Heart left ventricle (tissue), 16 donors: ENCODE measurements at regions of chr3 and their contacts with region 1.

Region 1: DNA sequence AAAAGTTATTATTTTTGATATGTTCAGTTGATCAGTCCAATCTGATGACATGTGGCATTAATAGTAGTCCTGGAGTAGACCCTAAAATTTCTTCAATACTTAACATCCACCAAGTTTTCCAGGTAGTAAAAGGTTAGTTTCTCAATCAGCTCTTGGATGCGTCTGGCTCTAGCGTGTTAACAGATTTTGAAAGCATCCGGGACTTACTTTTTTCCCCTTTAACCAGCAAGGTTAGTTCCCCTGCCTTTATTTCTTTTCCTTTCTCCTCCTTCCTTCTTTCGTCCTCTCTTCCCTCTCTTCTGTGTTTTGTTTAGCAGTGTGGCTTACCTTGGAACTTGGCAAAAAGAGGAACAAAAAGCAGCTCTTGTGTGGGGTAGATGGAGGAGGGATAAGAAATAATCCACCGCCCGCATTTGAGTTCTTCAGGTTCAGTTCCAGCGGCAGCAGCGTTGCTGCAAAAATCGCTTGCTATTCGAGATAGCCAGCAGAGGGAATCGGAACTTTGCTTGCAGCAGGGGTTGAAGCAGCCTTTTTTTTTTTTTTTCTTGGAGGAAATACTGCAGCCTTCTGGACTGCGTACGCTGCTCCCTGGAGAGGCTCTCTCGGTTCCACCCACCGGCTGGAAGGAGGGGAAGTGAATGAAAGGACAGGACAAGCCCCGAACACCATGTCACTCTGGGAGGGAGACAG is at the start of gene RBMS3:
- DNase-seq: peak; percentile 90 to 93 (median 92)
- ATAC-seq: peak; percentile 91 to 95 (median 94)
- H3K4me3 ChIP-seq: peak within 1 kb of the TSS; percentile 43 to 84 (median 66)
- H3K27ac ChIP-seq: peak within 1 kb of the TSS; percentile 83 to 96 (median 91)
- H3K4me1 ChIP-seq: peaks cover 0 to 29% (median 13%) of the 10 kb centered on the region in 12 donors
- H3K27me3 ChIP-seq: no peaks in the 10 kb centered on the region
- CTCF ChIP-seq: peak; percentile 22 to 80 (median 54)
- POLR2A ChIP-seq: peak in 1 of 2 donors; percentile 58
- total RNA-seq, gene RBMS3: 19.0 to 35.6 (median 27.3) TPM

Region 2: DNA sequence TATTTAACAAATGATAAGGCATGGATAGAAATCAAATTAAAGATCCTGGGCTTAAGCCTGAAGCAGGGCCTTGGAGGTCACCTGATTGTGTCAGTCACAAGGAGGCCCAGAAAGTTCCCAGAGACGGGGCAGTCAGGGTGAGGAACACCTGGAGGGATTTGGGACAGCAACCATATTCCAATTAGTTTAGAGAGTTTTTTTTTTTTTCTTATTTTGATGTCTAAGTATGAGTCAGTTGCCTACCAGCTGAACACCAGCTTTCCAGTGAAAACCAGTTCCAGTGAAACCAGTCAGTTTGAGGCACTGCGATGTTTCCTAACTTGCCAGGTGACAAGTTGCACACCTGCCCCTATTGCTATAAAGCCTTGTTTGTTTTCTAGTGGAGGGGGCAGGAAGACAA is 581.3 kb before region 1 on chr3:
- intact Hi-C with region 1: no loop called
- DNase-seq: no peak
- ATAC-seq: no peak
- H3K4me3 ChIP-seq: no peak overlapping the region
- H3K27ac ChIP-seq: no peak overlapping the region
- H3K4me1 ChIP-seq: peaks cover 0 to 4% (median 0%) of the 10 kb centered on the region in 12 donors
- H3K27me3 ChIP-seq: no peaks in the 10 kb centered on the region
- CTCF ChIP-seq: no peak
- POLR2A ChIP-seq: no peak

Region 3: GRCh38 chr3:29164825-29165224 is 115.7 kb before region 1 on chr3:
- intact Hi-C with region 1: loop called in 2 of 10 experiments (anchors 5 to 10 kb)
- DNase-seq: no peak
- ATAC-seq: no peak
- H3K4me3 ChIP-seq: no peak overlapping the region
- H3K27ac ChIP-seq: no peak overlapping the region
- H3K4me1 ChIP-seq: peaks cover 0 to 14% (median 0%) of the 10 kb centered on the region in 12 donors
- H3K27me3 ChIP-seq: no peaks in the 10 kb centered on the region
- CTCF ChIP-seq: no peak
- POLR2A ChIP-seq: no peak

Region 4: GRCh38 chr3:29245441-29245840 is 35.1 kb before region 1 on chr3:
- intact Hi-C with region 1: no loop called
- DNase-seq: no peak
- ATAC-seq: no peak
- H3K4me3 ChIP-seq: no peak overlapping the region
- H3K27ac ChIP-seq: no peak overlapping the region
- H3K4me1 ChIP-seq: peaks cover 0 to 4% (median 0%) of the 10 kb centered on the region in 12 donors
- H3K27me3 ChIP-seq: no peaks in the 10 kb centered on the region
- CTCF ChIP-seq: no peak
- POLR2A ChIP-seq: no peak

Region 5: DNA sequence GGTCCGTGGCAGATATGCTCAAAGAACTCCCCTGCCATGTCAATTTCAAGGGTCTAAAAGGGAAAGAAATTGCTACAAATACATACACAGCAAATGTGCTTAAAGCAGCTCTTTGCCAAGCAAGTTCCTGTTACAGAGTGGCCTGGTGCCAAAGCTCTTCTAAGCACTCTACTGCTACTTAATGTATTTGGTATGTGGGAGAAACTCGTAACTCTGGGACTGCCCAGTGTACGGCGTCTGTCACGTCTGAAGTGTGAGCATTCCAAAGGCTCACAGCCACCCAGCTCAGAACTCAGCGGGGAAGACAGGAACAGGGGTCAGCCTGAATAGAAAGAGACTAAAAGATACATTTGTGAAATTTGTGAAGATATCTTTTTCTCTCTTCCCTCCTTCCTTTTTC is 54.9 kb after region 1 on chr3:
- intact Hi-C with region 1: loop called in 9 of 10 experiments (anchors 5 to 10 kb)
- DNase-seq: peak; percentile 65 to 89 (median 86)
- ATAC-seq: peak; percentile 95 to 98 (median 96)
- H3K4me3 ChIP-seq: peak overlapping the region in 10 of 12 donors; percentile 6 to 48 (median 35)
- H3K27ac ChIP-seq: peak overlapping the region; percentile 29 to 91 (median 76)
- H3K4me1 ChIP-seq: peaks cover 14 to 96% (median 52%) of the 10 kb centered on the region in 12 donors
- H3K27me3 ChIP-seq: no peaks in the 10 kb centered on the region
- CTCF ChIP-seq: no peak
- POLR2A ChIP-seq: no peak

Region 6: DNA sequence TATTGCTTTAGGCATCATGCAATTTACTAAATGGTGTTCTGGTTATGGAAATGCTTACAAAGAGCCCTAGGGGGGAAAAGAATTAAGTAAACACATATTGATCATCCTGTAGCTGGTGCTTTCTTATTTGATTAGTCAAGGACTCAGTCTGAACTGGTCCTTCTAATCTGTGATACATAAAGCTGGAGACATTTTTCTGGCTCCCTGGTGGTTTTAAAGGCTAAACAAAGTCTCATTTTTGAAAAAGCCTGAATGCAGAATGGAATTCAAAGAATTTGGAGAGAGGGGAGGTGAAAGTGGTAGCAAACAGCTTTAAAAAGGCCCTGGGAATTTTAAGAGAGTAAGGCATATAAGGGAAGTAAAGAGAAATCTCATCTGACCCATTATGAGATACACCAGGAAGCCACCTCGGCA is 150.0 kb after region 1 on chr3:
- intact Hi-C with region 1: loop called in 4 of 10 experiments (anchors 5 to 10 kb)
- DNase-seq: no peak
- ATAC-seq: no peak
- H3K4me3 ChIP-seq: no peak overlapping the region
- H3K27ac ChIP-seq: peak overlapping the region in 3 of 12 donors; percentile 2 to 21 (median 15)
- H3K4me1 ChIP-seq: peaks cover 0 to 69% (median 32%) of the 10 kb centered on the region in 12 donors
- H3K27me3 ChIP-seq: no peaks in the 10 kb centered on the region
- CTCF ChIP-seq: no peak
- POLR2A ChIP-seq: no peak

Region 7: DNA sequence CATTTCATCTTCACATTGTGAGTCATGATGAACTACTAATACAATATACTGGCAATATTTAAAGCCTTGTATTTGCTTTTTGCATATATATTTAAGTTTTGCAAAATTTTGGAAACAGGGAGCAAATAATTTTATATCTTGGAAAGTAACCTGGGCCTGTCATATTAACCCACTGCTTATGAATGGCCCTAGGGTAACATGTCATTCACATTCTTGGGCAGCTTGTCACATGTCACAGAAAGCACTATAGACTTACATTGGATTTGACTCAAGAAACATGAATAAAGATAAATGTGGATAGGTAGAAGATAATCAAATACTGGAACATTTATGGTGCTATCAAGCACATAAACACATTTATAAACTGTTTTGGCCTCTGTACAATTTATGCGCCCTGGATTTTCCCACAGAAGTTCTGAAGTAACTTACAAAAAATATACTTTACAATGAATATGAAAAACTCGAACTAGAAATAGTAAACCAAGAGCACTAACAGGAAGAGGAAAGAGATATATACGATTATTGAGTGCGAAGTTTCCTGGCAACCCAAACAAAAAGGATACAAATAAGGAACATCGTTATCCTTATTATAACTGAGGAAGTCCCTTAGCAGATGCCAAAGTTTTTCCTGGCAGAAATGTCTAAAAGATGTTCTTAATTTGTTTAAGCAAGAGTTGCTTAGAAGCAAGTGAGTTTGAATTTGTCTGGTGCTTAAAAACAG is 257.5 kb after region 1 on chr3:
- intact Hi-C with region 1: loop called in 2 of 10 experiments (anchors 5 kb)
- DNase-seq: no peak
- ATAC-seq: peak in 1 of 4 donors; percentile 48
- H3K4me3 ChIP-seq: no peak overlapping the region
- H3K27ac ChIP-seq: peak overlapping the region in 6 of 12 donors; percentile 0 to 52 (median 28)
- H3K4me1 ChIP-seq: peaks cover 0 to 48% (median 22%) of the 10 kb centered on the region in 12 donors
- H3K27me3 ChIP-seq: no peaks in the 10 kb centered on the region
- CTCF ChIP-seq: no peak
- POLR2A ChIP-seq: no peak

Region 8: GRCh38 chr3:29693863-29694262 is 413.3 kb after region 1 on chr3:
- intact Hi-C with region 1: loop called in 2 of 10 experiments (anchors 5 kb)
- DNase-seq: no peak
- ATAC-seq: peak; percentile 17 to 49 (median 30)
- H3K4me3 ChIP-seq: no peak overlapping the region
- H3K27ac ChIP-seq: peak overlapping the region in 11 of 12 donors; percentile 40 to 82 (median 64)
- H3K4me1 ChIP-seq: peaks cover 6 to 48% (median 35%) of the 10 kb centered on the region in 12 donors
- H3K27me3 ChIP-seq: no peaks in the 10 kb centered on the region
- CTCF ChIP-seq: no peak
- POLR2A ChIP-seq: no peak